Mammary epithelial cell (primary cell): ENCODE measurements at regions of chr12 and their contacts with region 1.

Region 1: GRCh38 chr12:76083904-76084862 is at the start of gene NAP1L1:
- DNase-seq: peak; percentile 97
- H3K4me3 ChIP-seq: peak within 1 kb of the TSS; percentile 82 to 98 (median 95)
- H3K27ac ChIP-seq: peak within 1 kb of the TSS; percentile 96
- H3K4me1 ChIP-seq: peaks cover 14% of the 10 kb centered on the region
- H3K27me3 ChIP-seq: no peaks in the 10 kb centered on the region
- CTCF ChIP-seq: no peak
- total RNA-seq, gene NAP1L1: 167 to 381 TPM

Region 2: GRCh38 chr12:76183459-76184186 is 99.4 kb after region 1 on chr12:
- CTCF ChIA-PET with region 1: no interaction called
- dilution Hi-C with region 1: no loop called
- in situ Hi-C with region 1: no loop called
- intact Hi-C with region 1: loop called (anchors 1 kb)
- DNase-seq: peak; percentile 97
- H3K4me3 ChIP-seq: no peak overlapping the region
- H3K27ac ChIP-seq: peak overlapping the region; percentile 4
- H3K4me1 ChIP-seq: peaks cover 14% of the 10 kb centered on the region
- H3K27me3 ChIP-seq: no peaks in the 10 kb centered on the region
- CTCF ChIP-seq: no peak

Region 3: GRCh38 chr12:76236611-76237010 is 152.4 kb after region 1 on chr12:
- CTCF ChIA-PET with region 1: no interaction called
- dilution Hi-C with region 1: no loop called
- in situ Hi-C with region 1: no loop called
- intact Hi-C with region 1: loop called (anchors 2 kb)
- DNase-seq: peak; percentile 95
- H3K4me3 ChIP-seq: no peak overlapping the region
- H3K27ac ChIP-seq: peak overlapping the region; percentile 66
- H3K4me1 ChIP-seq: peaks cover 34% of the 10 kb centered on the region
- H3K27me3 ChIP-seq: no peaks in the 10 kb centered on the region
- CTCF ChIP-seq: no peak

Region 4: DNA sequence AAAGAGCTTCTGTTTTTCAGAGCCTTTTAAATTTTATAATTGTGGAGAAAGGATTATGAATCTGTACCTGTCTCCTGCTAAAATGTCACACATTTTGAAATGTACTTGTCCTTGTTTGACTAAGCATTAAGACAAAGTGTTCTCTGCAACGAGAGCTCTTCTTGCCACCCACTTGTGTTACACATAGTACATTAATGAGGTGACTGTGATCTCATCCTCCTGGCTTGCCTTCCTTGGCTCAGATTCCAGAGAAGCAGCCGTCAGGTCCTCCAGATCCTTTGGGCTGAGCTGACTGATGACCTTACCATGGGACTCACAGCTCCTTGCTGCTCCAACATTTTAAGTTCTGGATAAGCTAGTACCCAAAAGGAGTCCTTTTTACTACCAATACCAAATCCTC is 182.6 kb after region 1 on chr12:
- CTCF ChIA-PET with region 1: interaction called, 11 read pairs
- dilution Hi-C with region 1: no loop called
- in situ Hi-C with region 1: no loop called
- intact Hi-C with region 1: loop called (anchors 1 kb)
- DNase-seq: peak; percentile 72
- H3K4me3 ChIP-seq: no peak overlapping the region
- H3K27ac ChIP-seq: peak overlapping the region; percentile 32
- H3K4me1 ChIP-seq: peaks cover 32% of the 10 kb centered on the region
- H3K27me3 ChIP-seq: no peaks in the 10 kb centered on the region
- CTCF ChIP-seq: no peak

Region 5: GRCh38 chr12:76329163-76329562 is 245.0 kb after region 1 on chr12:
- CTCF ChIA-PET with region 1: no interaction called
- dilution Hi-C with region 1: no loop called
- in situ Hi-C with region 1: no loop called
- intact Hi-C with region 1: loop called (anchors 5 kb)
- DNase-seq: peak; percentile 58
- H3K4me3 ChIP-seq: no peak overlapping the region
- H3K27ac ChIP-seq: no peak overlapping the region
- H3K4me1 ChIP-seq: peaks cover 13% of the 10 kb centered on the region
- H3K27me3 ChIP-seq: no peaks in the 10 kb centered on the region
- CTCF ChIP-seq: no peak

Region 6: DNA sequence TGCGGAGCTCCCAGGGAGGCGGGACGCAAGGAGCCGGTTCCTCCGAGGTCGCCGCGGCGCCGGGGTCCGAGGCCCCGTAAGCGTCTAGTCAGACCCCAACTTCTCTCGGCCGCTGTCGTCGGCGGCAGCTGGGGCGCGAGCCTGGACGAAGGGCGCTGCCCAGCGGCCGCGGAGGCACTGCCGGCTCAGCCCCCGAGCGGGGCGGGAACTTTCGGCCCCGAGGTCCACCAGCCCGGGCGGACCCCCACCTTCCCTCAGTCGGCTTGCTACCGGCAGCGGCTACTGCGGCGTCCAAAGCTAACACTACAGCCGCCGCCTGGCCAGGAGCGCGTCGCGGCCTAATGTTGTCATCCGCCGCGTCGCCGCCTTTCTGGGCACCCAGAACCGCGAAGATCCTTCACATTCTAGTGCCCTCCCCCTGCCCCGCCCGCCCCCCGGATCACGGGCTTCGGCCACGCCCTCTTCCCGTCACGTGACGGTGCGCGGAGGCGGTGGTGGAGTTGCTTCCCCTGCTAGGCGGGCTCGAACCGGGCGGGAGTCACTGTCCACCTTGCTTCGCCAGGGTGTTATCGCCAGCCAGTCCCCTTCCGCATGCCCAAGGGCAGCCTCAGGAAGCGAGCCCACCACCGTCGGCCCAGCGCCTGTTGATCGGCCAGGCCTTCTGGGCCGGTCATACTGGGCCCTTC is 475.4 kb after region 1 on chr12 and contains the start of gene OSBPL8:
- CTCF ChIA-PET with region 1: no interaction called
- dilution Hi-C with region 1: no loop called
- in situ Hi-C with region 1: loop called in 1 of 2 experiments (anchors 25 kb)
- intact Hi-C with region 1: loop called (anchors 5 kb)
- DNase-seq: peak; percentile 92
- H3K4me3 ChIP-seq: peak within 1 kb of the TSS; percentile 70 to 74 (median 74)
- H3K27ac ChIP-seq: peak within 1 kb of the TSS; percentile 89
- H3K4me1 ChIP-seq: peaks cover 5% of the 10 kb centered on the region
- H3K27me3 ChIP-seq: no peaks in the 10 kb centered on the region
- CTCF ChIP-seq: peak in 1 of 2 donors; percentile 31
- total RNA-seq, gene OSBPL8: 87.4 to 88.4 TPM

Region 7: DNA sequence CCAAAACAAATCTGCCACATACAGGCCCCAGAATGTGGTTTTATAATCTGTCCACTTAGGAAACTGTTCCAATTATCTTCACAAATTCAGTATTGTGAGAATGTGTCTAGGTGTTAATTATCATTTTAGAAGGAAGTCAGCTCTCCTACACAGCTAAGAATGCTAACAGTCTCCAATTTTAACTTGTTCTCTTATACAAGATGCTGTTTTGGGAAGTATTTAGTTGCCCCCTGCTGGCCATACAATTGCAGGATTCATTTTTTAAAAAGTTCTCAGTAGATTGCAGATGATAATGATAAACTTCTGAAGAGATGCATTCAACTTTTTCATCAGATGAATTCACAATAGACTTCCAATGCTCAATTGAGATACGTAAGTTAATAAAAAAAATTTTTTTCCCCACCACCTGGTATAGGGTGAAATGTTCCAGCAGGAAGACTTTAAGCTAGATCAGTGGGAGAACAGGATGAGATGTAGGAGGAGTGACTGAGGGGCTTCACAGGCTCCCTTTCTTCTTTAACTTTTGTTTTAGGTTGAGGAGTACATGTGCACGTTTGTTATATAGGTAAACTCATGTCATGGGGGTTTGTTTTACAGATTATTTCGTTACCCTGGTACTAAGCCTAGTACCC is 502.7 kb after region 1 on chr12:
- CTCF ChIA-PET with region 1: no interaction called
- dilution Hi-C with region 1: no loop called
- in situ Hi-C with region 1: no loop called
- intact Hi-C with region 1: loop called (anchors 10 kb)
- DNase-seq: peak; percentile 43
- H3K4me3 ChIP-seq: no peak overlapping the region
- H3K27ac ChIP-seq: no peak overlapping the region
- H3K4me1 ChIP-seq: peaks cover 7% of the 10 kb centered on the region
- H3K27me3 ChIP-seq: no peaks in the 10 kb centered on the region
- CTCF ChIP-seq: peak; percentile 73 to 74